H1 (cell line): ENCODE measurements at regions of chr2 and their contacts with region 1.

Region 1: GRCh38 chr2:102615622-102616436 is 3.5 kb upstream of the SLC9A2 start:
- DNase-seq: no peak
- H3K4me3 ChIP-seq: no peak overlapping the region
- H3K27ac ChIP-seq: no peak overlapping the region
- H3K4me1 ChIP-seq: peaks cover 0 to 13% (median 7%) of the 10 kb centered on the region in 4 experiments; a peak in 6 of 7 replicates
- H3K27me3 ChIP-seq: peaks cover 16 to 30% (median 26%) of the 10 kb centered on the region in 4 experiments
- CTCF ChIP-seq: peak; percentile 80 to 95 (median 89)
- EP300 ChIP-seq: no peak
- POLR2A ChIP-seq: no peak
- RAD21 ChIP-seq: peak; percentile 88 to 90

Region 2: GRCh38 chr2:102103992-102104871 is 511.6 kb before region 1 on chr2:
- CTCF ChIA-PET with region 1: no interaction called
- POLR2A ChIA-PET with region 1: no interaction called
- DNase-seq: no peak
- H3K4me3 ChIP-seq: no peak overlapping the region
- H3K27ac ChIP-seq: no peak overlapping the region
- H3K4me1 ChIP-seq: no peaks in the 10 kb centered on the region
- H3K27me3 ChIP-seq: no peaks in the 10 kb centered on the region
- CTCF ChIP-seq: no peak
- EP300 ChIP-seq: no peak
- POLR2A ChIP-seq: no peak
- RAD21 ChIP-seq: no peak

Region 3: DNA sequence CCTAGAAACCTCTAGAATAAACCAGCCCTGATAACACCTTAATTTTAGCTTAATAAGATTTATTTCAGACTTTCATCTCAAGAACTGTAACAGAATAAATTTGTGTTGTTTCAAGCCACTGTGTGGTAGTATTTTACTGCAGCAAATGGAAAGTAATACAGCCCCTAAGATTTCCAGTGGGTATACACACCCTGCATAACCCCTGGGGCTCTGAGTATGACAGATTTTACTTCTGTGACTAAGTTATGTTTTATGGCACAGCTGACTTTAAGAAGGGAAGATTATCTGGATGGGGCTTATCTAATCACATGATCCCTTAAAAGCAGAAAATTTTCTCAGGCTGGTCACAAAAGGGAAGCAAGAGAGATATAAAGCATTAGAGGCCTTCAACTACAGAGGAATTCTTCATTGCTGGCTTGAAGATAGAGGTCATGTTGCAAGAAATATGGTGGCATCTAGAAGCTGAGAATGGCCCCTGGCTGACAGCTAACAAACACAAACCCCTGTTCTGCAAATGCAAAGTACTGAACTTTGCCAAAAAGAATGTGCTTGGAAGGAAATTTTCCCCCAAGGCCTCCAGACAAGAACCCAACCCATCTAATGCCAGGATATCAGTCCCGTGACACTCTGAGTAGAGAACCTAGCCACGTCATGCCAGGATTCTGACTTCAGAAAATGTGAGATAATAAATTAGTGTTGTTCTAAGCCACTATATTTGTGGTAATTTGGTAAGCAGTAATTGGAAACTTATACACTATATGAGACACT is 64.3 kb before region 1 on chr2:
- CTCF ChIA-PET with region 1: no interaction called
- POLR2A ChIA-PET with region 1: no interaction called
- DNase-seq: no peak
- H3K4me3 ChIP-seq: no peak overlapping the region
- H3K27ac ChIP-seq: no peak overlapping the region
- H3K4me1 ChIP-seq: no peaks in the 10 kb centered on the region
- H3K27me3 ChIP-seq: no peaks in the 10 kb centered on the region
- CTCF ChIP-seq: no peak
- EP300 ChIP-seq: no peak
- POLR2A ChIP-seq: no peak
- RAD21 ChIP-seq: no peak

Region 4: GRCh38 chr2:102703748-102704147 is 87.9 kb after region 1 on chr2:
- CTCF ChIA-PET with region 1: interaction called, 16 read pairs
- POLR2A ChIA-PET with region 1: no interaction called
- DNase-seq: no peak
- H3K4me3 ChIP-seq: no peak overlapping the region
- H3K27ac ChIP-seq: no peak overlapping the region
- H3K4me1 ChIP-seq: peaks cover 0 to 2% (median under 1%) of the 10 kb centered on the region in 4 experiments; a peak in 2 of 7 replicates
- H3K27me3 ChIP-seq: no peaks in the 10 kb centered on the region
- CTCF ChIP-seq: peak in 2 of 3 experiments; percentile 51 to 58; a peak in 3 of 4 replicates
- EP300 ChIP-seq: no peak
- POLR2A ChIP-seq: no peak
- RAD21 ChIP-seq: peak; percentile 70 to 75